H1 (cell line): ENCODE measurements at regions of chr14 and their contacts with region 1.

Region 1: GRCh38 chr14:23518709-23519108 is 32.9 kb downstream of the ZFHX2 start:
- DNase-seq: peak in 1 of 2 experiments; percentile 54
- H3K4me3 ChIP-seq: no peak overlapping the region
- H3K27ac ChIP-seq: no peak overlapping the region
- H3K4me1 ChIP-seq: peaks cover 7 to 10% (median 9%) of the 10 kb centered on the region in 4 experiments
- H3K27me3 ChIP-seq: peaks cover 0 to 4% (median 0%) of the 10 kb centered on the region in 4 experiments; a peak in 1 of 7 replicates
- CTCF ChIP-seq: peak in 1 of 3 experiments; percentile 30; a peak in 1 of 4 replicates
- EP300 ChIP-seq: no peak
- POLR2A ChIP-seq: peak in 1 of 2 experiments; percentile 58; a peak in 1 of 3 replicates
- RAD21 ChIP-seq: no peak

Region 2: GRCh38 chr14:23483236-23483854 is 35.4 kb before region 1 on chr14:
- CTCF ChIA-PET with region 1: interaction called, 2,092 read pairs
- POLR2A ChIA-PET with region 1: interaction called, 12 read pairs
- DNase-seq: peak in 1 of 2 experiments; percentile 71
- H3K4me3 ChIP-seq: peak overlapping the region in 1 of 4 experiments; percentile 35; a peak in 1 of 8 replicates
- H3K27ac ChIP-seq: peak overlapping the region; percentile 63; the same call in 1 of the 2 replicates
- H3K4me1 ChIP-seq: peaks cover 14 to 46% (median 36%) of the 10 kb centered on the region in 4 experiments
- H3K27me3 ChIP-seq: peaks cover 0 to 1% (median 0%) of the 10 kb centered on the region in 4 experiments; a peak in 1 of 7 replicates
- CTCF ChIP-seq: peak; percentile 94 to 98 (median 94)
- EP300 ChIP-seq: peak in 1 of 2 experiments; percentile 7; a peak in 1 of 3 replicates
- POLR2A ChIP-seq: 0 out of 3 replicates have a peak, but pooled peaks of 1 of the 2 experiments have one; percentile 5
- RAD21 ChIP-seq: peak; percentile 93 to 96

Region 3: GRCh38 chr14:23533652-23534435 is 15.1 kb after region 1 on chr14:
- CTCF ChIA-PET with region 1: interaction called, 1,314 read pairs
- POLR2A ChIA-PET with region 1: interaction called, 1,523 read pairs
- DNase-seq: no peak
- H3K4me3 ChIP-seq: no peak overlapping the region
- H3K27ac ChIP-seq: no peak overlapping the region
- H3K4me1 ChIP-seq: peaks cover under 1 to 13% (median 8%) of the 10 kb centered on the region in 4 experiments; a peak in 6 of 7 replicates
- H3K27me3 ChIP-seq: no peaks in the 10 kb centered on the region
- CTCF ChIP-seq: no peak
- EP300 ChIP-seq: no peak
- POLR2A ChIP-seq: no peak
- RAD21 ChIP-seq: no peak

Region 4: DNA sequence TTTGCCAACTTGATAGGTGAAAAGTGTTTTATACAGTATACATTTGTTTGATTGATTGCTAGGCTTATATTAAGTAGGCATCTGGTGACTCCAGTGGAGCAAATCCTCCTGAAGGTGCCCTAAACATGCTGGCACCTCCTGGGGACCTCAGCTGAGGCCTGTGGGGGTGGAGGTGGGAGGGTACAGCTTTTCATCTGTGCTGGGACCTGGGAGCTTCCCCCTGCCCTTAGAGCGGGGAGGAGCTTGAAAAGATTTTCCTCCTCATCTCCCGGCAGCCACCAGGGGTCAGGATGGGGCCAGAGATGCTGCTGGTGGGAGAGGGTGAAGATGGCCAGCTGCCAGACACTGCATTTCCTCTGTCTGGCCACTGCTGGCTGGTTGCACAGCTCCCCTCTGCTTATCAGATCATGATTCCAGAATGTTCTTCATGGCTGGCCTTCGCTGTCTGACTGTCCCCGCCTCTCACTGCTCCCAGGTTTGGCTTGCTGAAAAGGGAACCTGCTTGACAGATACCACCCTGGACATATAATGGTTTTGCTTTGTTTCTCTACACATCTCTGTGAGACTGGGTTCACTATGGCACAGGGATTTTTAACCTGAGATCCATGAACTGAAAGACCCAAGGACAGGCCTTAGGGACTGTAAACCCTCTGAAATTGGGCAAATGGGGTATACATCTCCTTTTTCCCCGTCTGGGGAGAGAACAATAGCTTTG is 70.3 kb after region 1 on chr14:
- CTCF ChIA-PET with region 1: no interaction called
- POLR2A ChIA-PET with region 1: no interaction called
- DNase-seq: peak in 1 of 2 experiments; percentile 87
- H3K4me3 ChIP-seq: no peak overlapping the region
- H3K27ac ChIP-seq: no peak overlapping the region
- H3K4me1 ChIP-seq: peaks cover 0 to 6% (median under 1%) of the 10 kb centered on the region in 4 experiments; a peak in 2 of 7 replicates
- H3K27me3 ChIP-seq: no peaks in the 10 kb centered on the region
- CTCF ChIP-seq: peak; percentile 88 to 95 (median 95)
- EP300 ChIP-seq: no peak
- POLR2A ChIP-seq: no peak
- RAD21 ChIP-seq: peak; percentile 90 to 92